ENCODE measurements at regions of chr10 and their contacts with region 1.

Region 1: GRCh38 chr10:33134011-33134751 is 176.2 kb upstream of the ITGB1 start:
- DNase-seq: peak; percentile 88
- H3K4me3 Mint-ChIP-seq: peak overlapping the region; percentile 41
- H3K27ac Mint-ChIP-seq: peak overlapping the region; percentile 79
- H3K4me1 Mint-ChIP-seq: peaks cover 78% of the 10 kb centered on the region
- H3K27me3 Mint-ChIP-seq: no peaks in the 10 kb centered on the region

Region 2: DNA sequence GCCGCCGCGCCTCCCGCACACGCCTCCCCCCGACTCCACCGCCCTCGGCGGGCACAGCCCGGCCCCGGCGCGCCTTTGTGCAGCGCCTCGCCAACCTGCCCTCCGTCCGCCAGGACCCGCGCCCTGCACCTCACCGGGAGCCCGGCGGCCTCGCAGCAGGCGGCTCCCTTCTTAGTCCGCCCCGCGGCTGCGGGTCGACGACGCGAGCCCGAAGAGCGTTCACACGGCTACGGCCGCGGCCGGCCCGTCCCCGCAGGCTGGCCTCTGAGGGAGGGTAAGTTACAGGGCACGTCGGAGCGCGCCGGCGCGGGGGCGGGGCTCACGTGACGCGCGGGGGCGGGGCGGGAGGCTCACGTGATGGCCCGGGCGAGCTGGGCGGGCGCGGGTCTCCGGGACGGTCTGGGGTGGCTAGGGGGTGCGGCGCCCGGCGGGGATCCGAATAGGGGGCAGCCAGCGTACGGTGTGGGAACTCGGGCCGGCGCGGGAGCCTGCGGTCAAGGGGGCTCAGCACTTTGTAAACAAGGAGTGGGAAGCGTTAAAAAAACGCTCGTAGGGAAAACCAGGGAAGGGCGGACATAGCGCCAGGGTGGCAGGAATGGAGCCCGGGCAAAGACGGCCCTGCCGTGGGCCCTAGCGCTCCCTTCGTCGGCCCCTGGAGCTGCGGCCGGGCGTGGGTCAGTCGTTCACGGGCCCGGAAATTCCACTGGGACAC is 1205.5 kb before region 1 on chr10 and contains the start of gene ARHGAP12:
- CTCF ChIA-PET with region 1: no interaction called
- intact Hi-C with region 1: loop called (anchors 5 kb)
- DNase-seq: peak; percentile 78
- H3K4me3 Mint-ChIP-seq: peak within 1 kb of the TSS; percentile 88
- H3K27ac Mint-ChIP-seq: peak within 1 kb of the TSS; percentile 30
- H3K4me1 Mint-ChIP-seq: peaks cover 37% of the 10 kb centered on the region
- H3K27me3 Mint-ChIP-seq: no peaks in the 10 kb centered on the region
- total RNA-seq, gene ARHGAP12: 2.3 to 2.6 TPM

Region 3: GRCh38 chr10:32378363-32379317 is 755.5 kb before region 1 on chr10:
- CTCF ChIA-PET with region 1: no interaction called
- intact Hi-C with region 1: loop called (anchors 5 kb)
- DNase-seq: peak; percentile 97
- H3K4me3 Mint-ChIP-seq: no peak overlapping the region
- H3K27ac Mint-ChIP-seq: no peak overlapping the region
- H3K4me1 Mint-ChIP-seq: peaks cover 13% of the 10 kb centered on the region
- H3K27me3 Mint-ChIP-seq: no peaks in the 10 kb centered on the region

Region 4: DNA sequence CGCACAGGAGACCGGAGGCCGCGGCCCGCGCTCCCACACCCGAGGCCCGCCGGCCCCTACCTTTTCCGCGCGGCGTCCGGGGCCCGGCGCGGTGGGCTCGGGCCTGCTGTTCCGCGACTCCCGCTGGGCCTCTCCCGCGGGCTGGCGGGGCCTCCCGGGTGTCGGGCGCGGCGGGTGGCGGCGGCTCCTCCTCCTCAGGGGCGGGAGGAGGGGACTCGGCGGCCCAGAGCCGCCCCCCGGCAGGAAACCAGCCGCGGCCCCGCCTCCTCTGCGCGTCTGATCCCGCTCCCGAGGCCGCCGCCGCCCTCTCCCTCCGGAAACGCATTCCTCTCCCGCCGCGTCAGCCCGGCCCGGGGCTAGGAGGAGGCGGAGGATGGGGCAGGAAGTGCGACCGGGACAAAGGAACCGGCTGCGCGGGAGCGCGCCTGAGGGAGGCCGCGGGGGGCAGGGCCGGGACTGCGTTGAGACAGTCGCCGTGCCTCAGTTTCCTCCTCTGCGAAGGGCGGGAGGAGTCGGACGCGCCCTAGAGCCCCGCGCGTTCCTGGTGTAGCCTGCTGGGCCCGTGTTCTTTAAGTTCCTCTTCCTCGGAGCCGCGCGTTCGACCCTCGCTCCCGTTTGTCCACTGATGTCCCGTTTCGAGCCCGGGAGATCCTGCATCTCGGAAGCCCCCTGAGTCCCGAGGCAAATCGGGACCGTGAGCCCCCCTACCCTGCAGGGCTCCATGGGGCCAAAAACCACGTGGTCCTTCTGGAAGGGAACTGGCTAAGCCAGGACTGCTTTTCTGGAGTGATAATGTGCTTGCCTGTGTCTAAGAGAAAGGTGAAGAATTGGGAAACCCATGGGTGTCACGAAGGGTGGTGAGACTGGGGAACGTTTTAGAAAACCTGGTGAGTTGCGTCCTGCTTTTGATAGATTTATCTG is 175.8 kb before region 1 on chr10 and contains the start of gene ITGB1:
- CTCF ChIA-PET with region 1: no interaction called
- intact Hi-C with region 1: loop called (anchors 1 kb)
- DNase-seq: peak; percentile 84
- H3K4me3 Mint-ChIP-seq: peak within 1 kb of the TSS; percentile 84
- H3K27ac Mint-ChIP-seq: peak within 1 kb of the TSS; percentile 89
- H3K4me1 Mint-ChIP-seq: peaks cover 40% of the 10 kb centered on the region
- H3K27me3 Mint-ChIP-seq: peaks cover 10% of the 10 kb centered on the region
- total RNA-seq, gene ITGB1: 30.3 to 34.5 TPM

Region 5: DNA sequence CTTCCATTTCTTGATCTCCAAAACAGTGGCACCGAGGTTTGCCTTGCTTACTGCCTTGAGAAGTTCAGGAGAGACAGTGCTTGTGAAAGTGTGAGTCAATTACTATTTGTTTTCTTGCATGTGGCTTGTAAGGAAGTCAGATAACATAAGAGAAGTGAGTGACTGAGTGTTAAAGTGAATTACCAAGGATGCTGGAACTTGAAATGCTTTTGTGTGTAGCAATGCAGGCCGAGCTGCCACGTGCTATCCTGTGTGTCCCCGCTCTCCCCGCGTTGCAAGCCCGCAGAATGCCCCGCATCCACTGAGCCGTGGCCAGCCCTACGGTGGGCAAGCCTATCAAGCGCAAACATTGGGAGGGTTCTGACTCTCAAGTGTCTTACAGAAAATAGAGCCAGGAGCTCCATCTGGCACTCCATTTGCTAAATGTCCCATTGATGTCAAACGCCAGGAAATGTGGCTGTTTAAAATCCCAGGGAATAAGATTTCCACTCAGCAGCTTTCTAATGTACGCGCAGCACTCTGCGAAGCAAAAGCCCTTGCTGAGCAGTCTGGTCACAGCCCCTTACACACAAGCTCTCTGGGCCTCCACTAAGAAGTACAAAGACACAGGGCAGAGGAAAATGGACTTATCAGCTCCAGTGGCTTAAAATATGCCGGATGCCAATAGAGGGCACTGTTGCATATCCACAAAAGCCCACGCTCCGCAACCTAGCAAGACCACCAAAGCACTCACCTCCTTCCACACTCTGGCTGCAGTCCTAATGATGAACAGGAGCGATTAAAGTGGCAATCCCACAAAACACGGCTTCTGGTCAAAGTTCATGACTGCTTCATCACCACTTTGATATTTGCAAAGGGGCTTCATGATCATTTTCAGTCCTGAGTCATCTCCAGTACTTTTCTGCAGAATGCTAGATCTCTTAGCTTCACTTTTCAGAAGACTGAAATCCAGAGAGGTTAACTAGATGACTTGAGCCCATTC is 18.2 kb before region 1 on chr10:
- CTCF ChIA-PET with region 1: interaction called, 8 read pairs
- intact Hi-C with region 1: loop called (anchors 1 kb)
- DNase-seq: no peak
- H3K4me3 Mint-ChIP-seq: no peak overlapping the region
- H3K27ac Mint-ChIP-seq: no peak overlapping the region
- H3K4me1 Mint-ChIP-seq: peaks cover 60% of the 10 kb centered on the region
- H3K27me3 Mint-ChIP-seq: no peaks in the 10 kb centered on the region

Region 6: GRCh38 chr10:33265621-33266020 is 131.4 kb after region 1 on chr10:
- CTCF ChIA-PET with region 1: no interaction called
- intact Hi-C with region 1: loop called (anchors 2 kb)
- DNase-seq: peak; percentile 84
- H3K4me3 Mint-ChIP-seq: no peak overlapping the region
- H3K27ac Mint-ChIP-seq: no peak overlapping the region
- H3K4me1 Mint-ChIP-seq: peaks cover 24% of the 10 kb centered on the region
- H3K27me3 Mint-ChIP-seq: peaks cover 17% of the 10 kb centered on the region

Region 7: DNA sequence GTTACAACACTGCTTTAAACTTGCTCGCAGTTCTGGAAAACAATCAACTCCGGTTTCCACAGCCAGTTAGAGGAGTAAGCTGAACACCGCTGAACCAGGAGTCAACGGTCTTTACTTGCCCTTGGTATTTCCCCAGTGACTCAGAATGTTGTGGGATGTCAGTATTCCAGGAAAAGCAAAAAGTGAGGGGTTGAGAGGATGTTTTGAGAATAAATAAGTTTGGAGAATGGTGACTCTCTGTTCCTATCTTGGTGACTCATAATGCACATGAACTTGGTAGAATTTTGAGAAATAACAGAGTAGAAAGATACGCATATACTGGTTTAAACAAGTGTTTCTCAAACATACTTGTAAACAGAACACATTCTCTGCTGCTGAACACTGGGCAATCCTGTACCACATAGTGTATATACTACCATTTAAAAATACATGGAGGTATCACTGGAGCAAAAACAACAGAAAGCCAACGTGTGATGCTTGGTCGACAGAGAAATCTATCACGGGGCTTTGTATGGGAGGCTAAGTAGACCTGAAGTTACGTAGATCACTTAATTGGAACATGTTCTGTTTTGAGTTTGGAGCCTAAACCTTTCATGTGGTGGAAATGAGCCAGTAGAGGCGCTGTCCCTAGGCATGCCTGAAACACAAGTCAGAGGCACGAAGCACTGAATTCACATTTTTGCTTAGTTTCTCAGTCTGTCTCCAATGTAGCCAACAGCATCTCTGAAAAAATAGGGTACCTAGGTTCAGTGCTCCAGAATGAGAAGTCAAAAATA is 1146.6 kb after region 1 on chr10:
- CTCF ChIA-PET with region 1: no interaction called
- intact Hi-C with region 1: loop called (anchors 10 kb)
- DNase-seq: peak; percentile 23
- H3K4me3 Mint-ChIP-seq: no peak overlapping the region
- H3K27ac Mint-ChIP-seq: peak overlapping the region; percentile 68
- H3K4me1 Mint-ChIP-seq: peaks cover 30% of the 10 kb centered on the region
- H3K27me3 Mint-ChIP-seq: peaks cover 6% of the 10 kb centered on the region

Measured in activated naive CD4-positive, alpha-beta T cell treated with anti-CD3 and anti-CD28 coated beads for 36 hours (primary cell).